Head of caudate nucleus (tissue), 42 donors: ENCODE measurements at regions of chr13 and their contacts with region 1.

Region 1: GRCh38 chr13:26482451-26483197 is 74.9 kb upstream of the WASF3 start:
- DNase-seq: peak in 38 of 42 donors; percentile 23 to 87 (median 66)

Region 2: GRCh38 chr13:26698392-26699196 is 216.0 kb after region 1 on chr13:
- intact Hi-C with region 1: loop called (anchors 5 kb)
- DNase-seq: peak; percentile 60 to 96 (median 90)